ENCODE measurements at regions of chr17 and their contacts with region 1.

Region 1: GRCh38 chr17:70552230-70552981 is 383.1 kb downstream of the KCNJ2 start:
- DNase-seq: no peak
- ATAC-seq: peak; percentile 56 to 69
- H3K4me3 ChIP-seq: no peak overlapping the region
- H3K27ac ChIP-seq: no peak overlapping the region
- H3K4me1 ChIP-seq: no peaks in the 10 kb centered on the region
- H3K27me3 ChIP-seq: no peaks in the 10 kb centered on the region

Region 2: DNA sequence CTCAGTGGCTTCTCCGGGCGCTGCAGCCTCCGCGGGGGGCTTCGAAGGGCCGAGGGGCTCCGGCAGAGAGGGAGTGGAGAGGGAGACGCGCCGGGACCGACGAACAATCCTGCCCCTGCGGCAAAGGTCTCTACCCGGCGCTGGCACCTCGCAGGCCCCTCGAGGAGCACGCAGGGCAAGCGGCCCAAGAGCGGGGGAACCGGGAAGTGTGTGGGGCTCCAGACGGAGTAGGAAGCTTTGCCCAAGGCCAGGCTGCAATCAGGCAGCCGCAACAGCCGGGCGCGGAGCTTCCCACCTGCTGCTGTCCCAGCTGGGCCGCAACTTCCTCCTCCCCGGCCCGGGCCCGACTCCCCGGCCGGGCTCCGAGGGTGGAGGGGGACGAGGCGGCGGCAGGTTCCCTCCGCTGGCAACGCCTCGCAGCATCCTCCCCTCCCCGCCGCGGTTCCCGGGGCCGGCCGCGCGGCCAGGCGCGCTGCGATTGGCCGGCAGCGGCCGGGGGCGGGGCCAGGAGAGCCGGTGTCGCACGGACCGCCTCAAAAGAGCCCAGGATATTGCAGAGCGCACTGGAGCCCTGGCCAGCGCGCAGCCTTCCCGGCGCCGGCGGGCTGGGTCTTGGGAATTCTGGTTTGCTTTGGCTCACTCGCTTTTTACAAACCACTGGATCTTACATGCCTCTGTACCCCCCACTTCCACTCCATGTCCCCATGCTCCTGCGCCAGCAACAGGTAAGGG is 383.3 kb before region 1 on chr17 and contains the start of gene KCNJ2:
- intact Hi-C with region 1: loop called in 2 of 4 experiments (anchors 10 kb)
- DNase-seq: peak; percentile 91 to 96 (median 96)
- ATAC-seq: peak; percentile 94 to 97
- H3K4me3 ChIP-seq: peak within 1 kb of the TSS; percentile 71
- H3K27ac ChIP-seq: peak within 1 kb of the TSS; percentile 65
- H3K4me1 ChIP-seq: peaks cover 2% of the 10 kb centered on the region
- H3K27me3 ChIP-seq: no peaks in the 10 kb centered on the region
- total RNA-seq, gene KCNJ2: 6.7 to 11.3 (median 8.6) TPM